ENCODE measurements at regions of chr1 and their contacts with region 1.

Region 1: DNA sequence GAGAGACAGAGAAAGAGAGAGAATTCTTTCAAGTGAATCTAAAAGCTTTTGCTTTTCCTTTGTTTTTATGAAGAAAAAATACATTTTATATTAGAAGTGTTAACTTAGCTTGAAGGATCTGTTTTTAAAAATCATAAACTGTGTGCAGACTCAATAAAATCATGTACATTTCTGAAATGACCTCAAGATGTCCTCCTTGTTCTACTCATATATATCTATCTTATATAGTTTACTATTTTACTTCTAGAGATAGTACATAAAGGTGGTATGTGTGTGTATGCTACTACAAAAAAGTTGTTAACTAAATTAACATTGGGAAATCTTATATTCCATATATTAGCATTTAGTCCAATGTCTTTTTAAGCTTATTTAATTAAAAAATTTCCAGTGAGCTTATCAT is 117.6 kb downstream of the PTPRC start:
- H3K4me3 Mint-ChIP-seq: no peak overlapping the region
- H3K27ac Mint-ChIP-seq: no peak overlapping the region
- H3K4me1 Mint-ChIP-seq: peaks cover 22% of the 10 kb centered on the region
- H3K27me3 Mint-ChIP-seq: no peaks in the 10 kb centered on the region

Region 2: DNA sequence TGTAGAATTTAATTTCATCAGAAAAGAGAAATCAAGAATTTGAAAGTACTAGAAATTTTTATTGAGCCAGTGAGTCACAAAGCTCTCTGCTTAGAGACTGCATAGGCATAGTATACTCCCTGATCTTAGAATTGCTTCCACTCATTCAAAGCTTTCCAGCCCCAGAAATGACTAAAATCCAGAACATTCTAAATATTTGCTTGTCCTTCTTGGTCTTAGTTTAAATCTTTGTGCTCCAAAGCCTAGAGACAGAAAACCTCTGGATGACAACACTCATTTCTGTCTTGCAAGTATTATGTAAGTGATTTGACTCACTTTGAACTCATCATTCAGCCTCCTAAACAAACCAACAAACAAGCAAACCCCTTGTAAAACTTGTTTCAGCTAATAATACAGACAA is 43.4 kb before region 1 on chr1:
- intact Hi-C with region 1: loop called (anchors 5 kb)
- H3K4me3 Mint-ChIP-seq: no peak overlapping the region
- H3K27ac Mint-ChIP-seq: no peak overlapping the region
- H3K4me1 Mint-ChIP-seq: peaks cover 6% of the 10 kb centered on the region
- H3K27me3 Mint-ChIP-seq: no peaks in the 10 kb centered on the region

Measured in dendritic cell treated with granulocyte-macrophage colony-stimulating factor and Interleukin-4, amounts not matched to agents 40 ng/mL and 50 ng/mL, for 4 days (primary cell).